Activated CD4-positive, alpha-beta memory T cell treated with anti-CD3 and anti-CD28 coated beads for 36 hours (primary cell): ENCODE measurements at regions of chr16 and their contacts with region 1.

Region 1: DNA sequence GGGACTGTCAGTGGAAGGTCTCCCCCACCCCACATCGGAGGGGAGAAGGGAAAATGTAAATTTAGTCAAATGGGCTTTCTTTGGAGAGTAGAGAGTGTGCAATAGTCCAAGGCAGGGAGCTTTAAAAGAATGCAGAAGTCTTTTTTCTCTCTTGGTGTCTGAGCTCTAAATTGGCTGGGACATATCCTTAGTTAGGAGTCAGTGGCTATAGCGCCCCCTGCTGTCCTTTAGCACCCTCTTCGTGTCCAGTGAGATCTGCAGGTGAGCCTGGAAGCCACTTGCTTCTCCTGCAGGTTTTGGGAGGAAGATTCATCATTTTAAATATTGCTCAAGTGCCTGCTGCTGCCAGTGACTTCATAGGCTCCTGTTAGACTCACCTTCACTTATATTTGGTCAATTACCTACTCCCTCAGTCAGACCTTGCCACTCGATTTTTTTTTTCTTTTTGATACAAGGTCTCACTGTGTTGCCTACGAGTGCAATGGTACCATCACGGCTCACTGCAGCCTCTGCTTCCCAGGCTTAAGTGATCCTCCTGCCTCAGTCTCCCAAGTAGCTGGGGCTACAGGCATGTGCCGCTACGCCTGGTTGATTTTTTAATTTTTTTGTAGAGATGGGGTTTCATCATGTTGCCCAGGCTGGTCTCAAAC is 174.8 kb downstream of the PRKCB start:
- DNase-seq: peak; percentile 86
- H3K4me3 Mint-ChIP-seq: no peak overlapping the region
- H3K27ac Mint-ChIP-seq: no peak overlapping the region
- H3K4me1 Mint-ChIP-seq: peaks cover 49% of the 10 kb centered on the region
- H3K27me3 Mint-ChIP-seq: no peaks in the 10 kb centered on the region

Region 2: GRCh38 chr16:23863511-23864422 is 146.8 kb before region 1 on chr16:
- CTCF ChIA-PET with region 1: interaction called, 22 read pairs
- POLR2A ChIA-PET with region 1: no interaction called
- intact Hi-C with region 1: no loop called
- DNase-seq: peak; percentile 44
- H3K4me3 Mint-ChIP-seq: peak overlapping the region; percentile 72
- H3K27ac Mint-ChIP-seq: peak overlapping the region; percentile 80
- H3K4me1 Mint-ChIP-seq: peaks cover 69% of the 10 kb centered on the region
- H3K27me3 Mint-ChIP-seq: no peaks in the 10 kb centered on the region

Region 3: GRCh38 chr16:23869052-23869451 is 141.5 kb before region 1 on chr16:
- CTCF ChIA-PET with region 1: interaction called, 22 read pairs
- POLR2A ChIA-PET with region 1: no interaction called
- intact Hi-C with region 1: no loop called
- DNase-seq: peak; percentile 64
- H3K4me3 Mint-ChIP-seq: no peak overlapping the region
- H3K27ac Mint-ChIP-seq: peak overlapping the region; percentile 44
- H3K4me1 Mint-ChIP-seq: peaks cover 56% of the 10 kb centered on the region
- H3K27me3 Mint-ChIP-seq: no peaks in the 10 kb centered on the region

Region 4: DNA sequence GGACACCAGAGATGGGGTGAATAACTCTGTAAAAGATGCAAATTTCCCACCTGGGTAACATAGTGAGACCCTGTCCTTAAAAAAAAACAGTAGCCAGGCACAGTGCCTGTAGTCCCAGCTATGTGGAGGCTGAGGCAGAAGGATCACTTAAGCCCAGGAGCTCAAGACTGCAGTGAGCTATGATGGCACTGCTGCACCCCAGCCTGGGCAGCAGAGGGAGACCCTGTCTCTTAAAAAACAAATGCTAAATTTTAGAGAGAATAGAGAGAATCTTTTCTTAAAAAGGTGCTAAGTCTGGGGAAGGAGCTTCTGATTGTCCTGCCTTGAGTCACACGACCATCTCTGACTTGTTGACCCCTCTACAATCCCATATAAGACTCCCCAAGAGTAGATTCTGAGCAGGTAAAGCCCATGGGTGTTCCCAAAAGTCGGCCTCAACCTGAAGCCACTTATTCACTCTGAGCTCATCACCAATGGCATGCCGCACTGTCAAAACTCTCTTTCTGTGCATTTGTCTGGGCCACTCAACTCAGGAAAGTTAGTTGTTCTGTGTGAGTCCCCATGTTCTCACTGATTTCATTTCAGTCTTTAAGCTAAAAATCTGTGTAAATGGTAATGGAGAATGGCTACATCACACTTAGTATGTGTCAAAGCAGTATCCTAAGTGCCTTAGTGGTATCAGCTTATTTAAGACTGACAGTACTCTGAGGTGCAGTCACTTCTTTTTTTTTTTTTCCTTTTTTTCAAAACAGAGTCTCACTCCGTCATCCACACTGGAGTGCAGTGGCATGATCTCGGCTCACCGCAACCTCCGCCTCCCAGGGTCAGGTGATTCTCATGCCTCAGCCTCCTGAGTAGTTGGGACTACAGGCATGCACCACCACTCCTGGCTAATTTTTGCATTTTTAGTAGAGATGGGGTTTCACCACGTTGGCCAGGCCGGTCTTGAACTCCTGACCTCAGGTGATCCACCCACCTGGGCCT is 133.2 kb before region 1 on chr16:
- CTCF ChIA-PET with region 1: interaction called, 42 read pairs
- POLR2A ChIA-PET with region 1: no interaction called
- intact Hi-C with region 1: loop called (anchors 2 kb)
- DNase-seq: peak; percentile 65
- H3K4me3 Mint-ChIP-seq: no peak overlapping the region
- H3K27ac Mint-ChIP-seq: peak overlapping the region; percentile 49
- H3K4me1 Mint-ChIP-seq: peaks cover 73% of the 10 kb centered on the region
- H3K27me3 Mint-ChIP-seq: no peaks in the 10 kb centered on the region

Region 5: DNA sequence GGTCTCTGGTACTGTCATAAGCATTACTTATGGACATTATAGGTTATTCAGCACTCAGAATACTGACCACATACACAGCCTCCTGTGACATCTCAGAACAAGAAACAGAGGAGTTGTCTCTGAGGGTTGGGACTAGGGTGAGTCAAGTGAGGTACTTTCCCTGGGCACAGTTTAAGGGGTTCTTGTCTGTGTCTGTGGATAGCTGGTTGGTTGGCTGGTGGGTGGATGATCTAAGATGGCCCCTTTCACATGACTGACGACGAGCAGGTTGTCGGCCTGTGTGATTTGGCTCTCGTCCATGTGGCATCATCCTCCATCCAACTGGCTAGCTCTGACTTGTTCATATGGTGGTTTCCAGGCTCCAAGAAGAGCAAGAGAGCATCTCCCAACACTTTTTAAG is 10.9 kb before region 1 on chr16:
- CTCF ChIA-PET with region 1: interaction called, 48 read pairs
- POLR2A ChIA-PET with region 1: interaction called, 3 read pairs
- intact Hi-C with region 1: no loop called
- DNase-seq: peak; percentile 89
- H3K4me3 Mint-ChIP-seq: no peak overlapping the region
- H3K27ac Mint-ChIP-seq: peak overlapping the region; percentile 18
- H3K4me1 Mint-ChIP-seq: peaks cover 20% of the 10 kb centered on the region
- H3K27me3 Mint-ChIP-seq: no peaks in the 10 kb centered on the region

Region 6: GRCh38 chr16:24036614-24037013 is 26.0 kb after region 1 on chr16:
- CTCF ChIA-PET with region 1: interaction called, 25 read pairs
- POLR2A ChIA-PET with region 1: no interaction called
- intact Hi-C with region 1: no loop called
- DNase-seq: peak; percentile 36
- H3K4me3 Mint-ChIP-seq: no peak overlapping the region
- H3K27ac Mint-ChIP-seq: no peak overlapping the region
- H3K4me1 Mint-ChIP-seq: peaks cover 30% of the 10 kb centered on the region
- H3K27me3 Mint-ChIP-seq: no peaks in the 10 kb centered on the region